CD4-positive, alpha-beta memory T cell (primary cell): ENCODE measurements at regions of chrX and their contacts with region 1.

Region 1: GRCh38 chrX:49230469-49231232 is 2.5 kb downstream of the CACNA1F start:
- DNase-seq: peak; percentile 29 to 58 (median 47)
- H3K4me3 ChIP-seq: peak overlapping the region in 1 of 2 donors; percentile 43
- H3K4me3 Mint-ChIP-seq: peak overlapping the region; percentile 76 to 84 (median 81)
- H3K27ac ChIP-seq: peak overlapping the region; percentile 58
- H3K27ac Mint-ChIP-seq: peak overlapping the region; percentile 81 to 95 (median 92)
- H3K4me1 ChIP-seq: peaks cover 17% of the 10 kb centered on the region
- H3K4me1 Mint-ChIP-seq: peaks cover 9 to 26% (median 12%) of the 10 kb centered on the region in 4 donors
- H3K27me3 ChIP-seq: no peaks in the 10 kb centered on the region
- H3K27me3 Mint-ChIP-seq: no peaks in the 10 kb centered on the region

Region 2: GRCh38 chrX:49043220-49043986 is 187.2 kb before region 1 on chrX and contains the start of gene TFE3:
- CTCF ChIA-PET with region 1: no interaction called
- POLR2A ChIA-PET with region 1: no interaction called
- intact Hi-C with region 1: no loop called
- DNase-seq: peak; percentile 91 to 99 (median 96)
- H3K4me3 ChIP-seq: peak within 1 kb of the TSS in 1 of 2 donors; percentile 63
- H3K4me3 Mint-ChIP-seq: peak within 1 kb of the TSS; percentile 84 to 94 (median 89)
- H3K27ac ChIP-seq: peak within 1 kb of the TSS; percentile 93
- H3K27ac Mint-ChIP-seq: peak within 1 kb of the TSS; percentile 93 to 97 (median 96)
- H3K4me1 ChIP-seq: peaks cover 39% of the 10 kb centered on the region
- H3K4me1 Mint-ChIP-seq: peaks cover 18 to 47% (median 30%) of the 10 kb centered on the region in 4 donors
- H3K27me3 ChIP-seq: no peaks in the 10 kb centered on the region
- H3K27me3 Mint-ChIP-seq: no peaks in the 10 kb centered on the region
- total RNA-seq, gene TFE3: 35.5 to 37.6 TPM

Region 3: DNA sequence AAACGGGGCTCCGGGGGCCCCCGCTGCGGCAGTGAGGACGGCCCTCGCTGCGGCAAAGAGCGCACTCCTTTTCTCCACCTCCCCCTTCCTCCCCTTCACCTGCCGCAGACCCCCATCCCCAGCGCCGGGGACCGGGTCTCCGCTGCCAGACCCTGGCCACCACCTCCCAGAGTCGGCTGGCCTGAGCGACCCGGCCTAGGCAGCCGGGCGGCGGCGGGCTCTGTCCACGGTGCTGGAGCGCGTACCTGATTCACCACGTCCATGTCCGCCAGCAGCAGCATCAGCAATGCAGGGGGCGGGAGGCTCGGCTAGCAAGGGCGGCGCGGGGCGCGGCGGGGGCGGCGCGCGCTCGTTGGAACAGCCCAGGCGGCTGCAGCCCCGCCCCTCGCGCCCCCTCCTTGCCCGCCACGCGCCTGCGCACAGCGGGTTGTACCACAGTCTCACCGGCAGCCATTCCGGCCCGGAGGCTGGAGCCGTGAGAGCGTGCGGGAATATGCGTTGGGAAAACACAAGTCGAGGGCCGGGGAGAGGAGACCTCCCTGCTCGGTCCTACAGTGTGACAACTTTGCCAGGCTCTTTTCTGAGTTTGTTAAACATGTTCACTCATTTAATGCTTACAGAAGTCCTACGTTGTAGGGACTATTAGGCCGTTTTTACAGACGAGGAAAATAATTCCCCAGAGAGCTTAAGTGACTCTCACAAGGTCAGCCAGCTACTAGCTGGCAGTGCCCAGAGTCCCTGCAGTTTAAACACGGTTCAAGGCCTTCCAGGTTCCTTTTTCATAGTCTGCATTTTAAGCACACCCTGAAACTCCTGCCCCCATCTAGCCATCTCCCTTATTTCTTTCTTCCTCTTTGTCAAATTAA is 30.5 kb before region 1 on chrX and contains the start of gene SYP:
- CTCF ChIA-PET with region 1: no interaction called
- POLR2A ChIA-PET with region 1: interaction called, 5 read pairs
- intact Hi-C with region 1: loop called (anchors 1 kb)
- DNase-seq: peak; percentile 86 to 89 (median 87)
- H3K4me3 ChIP-seq: no peak within 1 kb of the TSS
- H3K4me3 Mint-ChIP-seq: peak within 1 kb of the TSS; percentile 57 to 77 (median 64)
- H3K27ac ChIP-seq: no peak within 1 kb of the TSS
- H3K27ac Mint-ChIP-seq: peak within 1 kb of the TSS; percentile 5 to 86 (median 58)
- H3K4me1 ChIP-seq: peaks cover 13% of the 10 kb centered on the region
- H3K4me1 Mint-ChIP-seq: peaks cover 7 to 18% (median 12%) of the 10 kb centered on the region in 4 donors
- H3K27me3 ChIP-seq: no peaks in the 10 kb centered on the region
- H3K27me3 Mint-ChIP-seq: peaks cover 0 to 1% of the 10 kb centered on the region in 2 donors
- total RNA-seq, gene SYP: 0.50 to 0.73 TPM

Region 4: DNA sequence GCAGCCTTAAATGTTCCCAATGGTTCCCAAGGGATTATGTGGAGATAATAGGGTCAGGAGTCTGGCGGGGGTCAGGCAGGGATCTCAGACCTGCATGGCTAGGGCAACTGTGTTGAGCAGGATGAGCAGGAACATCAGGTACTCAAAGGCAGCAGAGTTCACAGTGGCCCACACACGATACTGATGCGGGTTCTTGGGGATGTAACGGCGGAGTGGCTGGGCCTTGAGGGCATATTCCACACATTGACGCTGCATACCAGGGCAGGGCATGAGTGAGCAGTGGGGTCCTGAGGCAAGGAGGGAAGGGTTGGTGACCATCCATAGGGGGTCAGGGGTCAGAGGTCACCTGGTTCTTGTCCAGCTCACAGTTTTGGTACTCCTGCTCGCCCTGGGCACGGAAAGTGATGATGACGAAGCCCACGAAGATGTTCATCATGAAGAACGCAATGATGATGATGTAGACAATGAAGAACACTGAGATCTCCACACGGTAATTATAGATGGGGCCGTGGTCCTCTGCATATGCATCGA is 15.6 kb before region 1 on chrX:
- CTCF ChIA-PET with region 1: no interaction called
- POLR2A ChIA-PET with region 1: no interaction called
- intact Hi-C with region 1: no loop called
- DNase-seq: no peak
- H3K4me3 ChIP-seq: no peak overlapping the region
- H3K4me3 Mint-ChIP-seq: no peak overlapping the region
- H3K27ac ChIP-seq: no peak overlapping the region
- H3K27ac Mint-ChIP-seq: no peak overlapping the region
- H3K4me1 ChIP-seq: no peaks in the 10 kb centered on the region
- H3K4me1 Mint-ChIP-seq: peaks cover 0 to 3% (median 0%) of the 10 kb centered on the region in 4 donors
- H3K27me3 ChIP-seq: no peaks in the 10 kb centered on the region
- H3K27me3 Mint-ChIP-seq: peaks cover 1 to 3% of the 10 kb centered on the region in 2 donors

Region 5: DNA sequence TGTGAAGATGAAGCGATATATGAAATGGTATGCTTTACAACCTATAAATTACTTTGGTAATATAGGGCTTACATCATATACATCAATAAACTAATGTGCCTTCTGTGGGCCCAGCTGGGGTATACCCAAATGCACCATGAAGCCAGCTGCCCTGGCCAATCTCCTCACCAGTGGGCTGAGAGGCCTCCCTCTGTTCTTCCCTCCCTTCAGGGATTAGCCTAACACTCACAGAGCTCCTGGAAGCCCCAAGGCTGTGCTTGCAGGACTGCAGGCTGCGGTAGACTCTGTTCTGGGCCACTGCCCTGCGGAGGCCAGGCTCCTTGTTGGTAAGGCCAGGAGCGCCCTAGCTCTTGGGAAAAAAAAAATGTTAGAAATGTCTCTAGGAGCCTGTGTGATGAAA is 431.2 kb after region 1 on chrX:
- CTCF ChIA-PET with region 1: no interaction called
- POLR2A ChIA-PET with region 1: no interaction called
- intact Hi-C with region 1: no loop called
- DNase-seq: no peak
- H3K4me3 ChIP-seq: no peak overlapping the region
- H3K4me3 Mint-ChIP-seq: no peak overlapping the region
- H3K27ac ChIP-seq: no peak overlapping the region
- H3K27ac Mint-ChIP-seq: no peak overlapping the region
- H3K4me1 ChIP-seq: no peaks in the 10 kb centered on the region
- H3K4me1 Mint-ChIP-seq: no peaks in the 10 kb centered on the region
- H3K27me3 ChIP-seq: no peaks in the 10 kb centered on the region
- H3K27me3 Mint-ChIP-seq: no peaks in the 10 kb centered on the region